ENCODE measurements at regions of chr9 and their contacts with region 1.

Region 1: DNA sequence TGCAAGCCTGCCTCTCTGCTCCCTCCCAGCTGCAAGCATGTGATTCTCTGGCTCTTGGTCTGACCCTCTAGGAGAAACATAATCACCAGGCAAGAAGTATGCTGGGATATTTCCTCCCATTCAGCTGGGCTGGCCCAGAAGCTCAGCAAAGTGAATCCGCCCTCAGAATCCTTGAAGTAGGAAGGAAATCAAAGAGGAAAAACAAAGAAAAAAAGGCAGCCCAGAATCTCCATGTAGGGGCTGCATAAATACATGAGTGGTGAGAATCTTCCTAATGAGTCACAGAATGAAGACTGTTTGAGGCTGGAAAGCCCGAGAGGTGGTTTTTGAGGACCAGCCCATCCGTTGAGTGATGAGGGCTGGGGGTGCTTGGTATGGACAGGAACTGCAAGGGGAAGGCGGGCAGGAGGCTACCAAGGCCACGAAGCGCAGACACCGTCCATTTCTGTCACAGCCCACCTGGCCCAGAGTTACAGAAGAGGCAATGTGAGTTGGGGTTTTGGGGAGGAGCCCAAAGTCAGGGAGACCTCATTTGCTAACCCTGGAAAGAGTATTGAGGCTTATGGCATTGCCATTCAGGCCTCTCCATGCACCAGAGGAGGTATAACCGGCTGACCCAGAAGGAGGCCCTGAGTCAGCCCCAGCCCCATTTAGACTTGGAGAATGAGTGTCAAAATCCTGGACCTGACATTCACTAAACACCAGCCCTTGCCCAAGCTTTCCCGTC is 33.4 kb upstream of the TGFBR1 start:
- DNase-seq: no peak
- H3K4me3 ChIP-seq: no peak overlapping the region
- H3K27ac ChIP-seq: no peak overlapping the region
- H3K4me1 ChIP-seq: no peaks in the 10 kb centered on the region
- H3K27me3 ChIP-seq: no peaks in the 10 kb centered on the region
- CTCF ChIP-seq: no peak

Region 2: GRCh38 chr9:99085949-99086948 is 14.8 kb after region 1 on chr9:
- CTCF ChIA-PET with region 1: no interaction called
- POLR2A ChIA-PET with region 1: interaction called, 11 read pairs
- intact Hi-C with region 1: no loop called
- DNase-seq: no peak
- H3K4me3 ChIP-seq: no peak overlapping the region
- H3K27ac ChIP-seq: no peak overlapping the region
- H3K4me1 ChIP-seq: no peaks in the 10 kb centered on the region
- H3K27me3 ChIP-seq: no peaks in the 10 kb centered on the region
- CTCF ChIP-seq: no peak

Region 3: GRCh38 chr9:99140685-99141314 is 69.3 kb after region 1 on chr9:
- CTCF ChIA-PET with region 1: no interaction called
- POLR2A ChIA-PET with region 1: no interaction called
- intact Hi-C with region 1: no loop called
- DNase-seq: peak in 1 of 2 experiments; percentile 34
- H3K4me3 ChIP-seq: no peak overlapping the region
- H3K27ac ChIP-seq: no peak overlapping the region
- H3K4me1 ChIP-seq: no peaks in the 10 kb centered on the region
- H3K27me3 ChIP-seq: no peaks in the 10 kb centered on the region
- CTCF ChIP-seq: peak; percentile 74

Measured in PC-9 (cell line).